ENCODE measurements at regions of chrX and their contacts with region 1.

Region 1: GRCh38 chrX:30971774-30972603 is 82.9 kb upstream of the TAB3 start:
- DNase-seq: peak; percentile 53
- ATAC-seq: peak; percentile 93
- H3K4me3 ChIP-seq: peak overlapping the region in 1 of 3 experiments; percentile 31; a peak in 3 of 6 replicates
- H3K27ac ChIP-seq: no peak overlapping the region
- H3K4me1 ChIP-seq: peaks cover 46% of the 10 kb centered on the region
- H3K27me3 ChIP-seq: no peaks in the 10 kb centered on the region
- CTCF ChIP-seq: peak; percentile 78
- EP300 ChIP-seq: no peak
- POLR2A ChIP-seq: no peak
- RAD21 ChIP-seq: peak; percentile 57

Region 2: DNA sequence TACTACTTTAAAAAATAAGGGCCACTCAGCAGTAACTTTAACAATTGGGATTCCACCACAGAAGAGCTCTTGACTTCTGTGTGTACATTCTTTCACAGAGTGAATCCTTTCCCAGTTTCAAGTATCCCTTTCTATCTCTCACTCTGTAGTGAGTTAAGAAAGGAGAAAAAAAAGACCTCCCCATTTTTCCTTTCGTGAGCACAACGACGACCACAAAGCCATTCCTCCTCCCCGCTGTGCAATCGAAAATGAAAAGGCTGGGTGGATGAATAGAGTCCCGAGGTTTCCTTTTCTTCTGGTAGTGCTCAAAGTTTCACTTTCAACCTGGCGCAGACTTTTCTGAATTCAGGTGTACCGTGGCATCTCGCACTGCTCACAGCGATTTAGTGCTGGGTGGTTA is 140.9 kb before region 1 on chrX:
- CTCF ChIA-PET with region 1: no interaction called
- POLR2A ChIA-PET with region 1: no interaction called
- in situ Hi-C with region 1: no loop called
- intact Hi-C with region 1: no loop called
- DNase-seq: no peak
- ATAC-seq: no peak
- H3K4me3 ChIP-seq: no peak overlapping the region
- H3K27ac ChIP-seq: no peak overlapping the region
- H3K4me1 ChIP-seq: peaks cover 35% of the 10 kb centered on the region
- H3K27me3 ChIP-seq: no peaks in the 10 kb centered on the region
- CTCF ChIP-seq: no peak
- EP300 ChIP-seq: no peak
- POLR2A ChIP-seq: no peak
- RAD21 ChIP-seq: no peak

Region 3: GRCh38 chrX:30992381-30992904 is 20.5 kb after region 1 on chrX:
- CTCF ChIA-PET with region 1: no interaction called
- POLR2A ChIA-PET with region 1: interaction called, 3 read pairs
- in situ Hi-C with region 1: no loop called
- intact Hi-C with region 1: loop called (anchors 2 kb)
- DNase-seq: peak; percentile 93
- ATAC-seq: peak; percentile 92
- H3K4me3 ChIP-seq: no peak overlapping the region
- H3K27ac ChIP-seq: peak overlapping the region; percentile 84
- H3K4me1 ChIP-seq: peaks cover 64% of the 10 kb centered on the region
- H3K27me3 ChIP-seq: no peaks in the 10 kb centered on the region
- CTCF ChIP-seq: no peak
- EP300 ChIP-seq: peak in 1 of 2 experiments; percentile 73; a peak in 2 of 4 replicates
- POLR2A ChIP-seq: no peak
- RAD21 ChIP-seq: no peak

Measured in HepG2 (cell line).